CD14-positive monocyte (primary cell): ENCODE measurements at regions of chr22 and their contacts with region 1.

Region 1: DNA sequence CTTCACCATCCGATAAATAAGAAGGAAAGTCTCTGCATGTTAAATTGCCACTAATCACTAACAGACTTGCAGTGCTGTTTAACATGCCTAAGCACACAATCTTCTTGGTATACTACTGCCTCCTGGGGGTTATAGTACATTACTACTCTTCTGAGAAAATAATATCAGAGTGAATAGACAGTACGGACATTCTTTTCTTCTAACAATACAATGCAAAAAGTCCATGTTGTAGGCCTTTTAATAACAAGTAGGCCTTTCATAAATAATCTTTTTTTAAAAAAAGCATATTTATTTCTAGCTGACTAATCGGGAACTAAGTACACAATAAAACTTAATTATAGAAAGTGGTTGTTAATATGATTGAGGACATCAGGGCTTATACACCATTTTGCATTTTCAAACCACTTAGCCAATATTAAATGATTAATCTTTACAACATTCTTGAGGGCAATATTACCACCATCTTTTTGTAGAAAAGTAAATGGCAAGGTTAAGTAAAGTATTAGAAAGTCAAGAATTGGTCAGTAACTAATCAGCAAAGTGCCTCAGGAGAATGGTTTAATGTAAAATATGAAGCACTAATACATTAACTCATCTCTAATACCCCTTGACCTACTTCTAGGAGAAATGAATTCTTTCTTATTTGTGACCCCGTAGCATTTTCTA is 84.7 kb downstream of the TTC28 start:
- DNase-seq: peak; percentile 10 to 46 (median 26)
- H3K4me3 ChIP-seq: no peak overlapping the region
- H3K4me3 Mint-ChIP-seq: no peak overlapping the region
- H3K27ac ChIP-seq: no peak overlapping the region
- H3K27ac Mint-ChIP-seq: no peak overlapping the region
- H3K4me1 ChIP-seq: no peaks in the 10 kb centered on the region
- H3K4me1 Mint-ChIP-seq: no peaks in the 10 kb centered on the region
- H3K27me3 ChIP-seq: no peaks in the 10 kb centered on the region
- H3K27me3 Mint-ChIP-seq: peaks cover 0 to 2% (median 0%) of the 10 kb centered on the region in 3 donors
- CTCF ChIP-seq: peak; percentile 87

Region 2: GRCh38 chr22:27880778-27881394 is 714.0 kb before region 1 on chr22:
- intact Hi-C with region 1: loop called in 1 of 2 experiments (anchors 10 kb)
- DNase-seq: peak in 2 of 3 donors; percentile 27 to 33
- H3K4me3 ChIP-seq: no peak overlapping the region
- H3K4me3 Mint-ChIP-seq: no peak overlapping the region
- H3K27ac ChIP-seq: no peak overlapping the region
- H3K27ac Mint-ChIP-seq: peak overlapping the region in 1 of 7 donors; percentile 32
- H3K4me1 ChIP-seq: no peaks in the 10 kb centered on the region
- H3K4me1 Mint-ChIP-seq: no peaks in the 10 kb centered on the region
- H3K27me3 ChIP-seq: no peaks in the 10 kb centered on the region
- H3K27me3 Mint-ChIP-seq: no peaks in the 10 kb centered on the region
- CTCF ChIP-seq: peak; percentile 64

Region 3: GRCh38 chr22:28019881-28020871 is 574.8 kb before region 1 on chr22:
- intact Hi-C with region 1: loop called (anchors 5 to 10 kb)
- DNase-seq: peak; percentile 9 to 44 (median 31)
- H3K4me3 ChIP-seq: no peak overlapping the region
- H3K4me3 Mint-ChIP-seq: no peak overlapping the region
- H3K27ac ChIP-seq: no peak overlapping the region
- H3K27ac Mint-ChIP-seq: peak overlapping the region in 1 of 7 donors; percentile 50
- H3K4me1 ChIP-seq: no peaks in the 10 kb centered on the region
- H3K4me1 Mint-ChIP-seq: no peaks in the 10 kb centered on the region
- H3K27me3 ChIP-seq: no peaks in the 10 kb centered on the region
- H3K27me3 Mint-ChIP-seq: peaks cover 0 to 3% (median 2%) of the 10 kb centered on the region in 3 donors
- CTCF ChIP-seq: peak; percentile 96

Region 4: GRCh38 chr22:28051787-28052356 is 543.1 kb before region 1 on chr22:
- intact Hi-C with region 1: loop called (anchors 2 to 10 kb)
- DNase-seq: peak; percentile 4 to 23 (median 9)
- H3K4me3 ChIP-seq: no peak overlapping the region
- H3K4me3 Mint-ChIP-seq: no peak overlapping the region
- H3K27ac ChIP-seq: no peak overlapping the region
- H3K27ac Mint-ChIP-seq: no peak overlapping the region
- H3K4me1 ChIP-seq: no peaks in the 10 kb centered on the region
- H3K4me1 Mint-ChIP-seq: no peaks in the 10 kb centered on the region
- H3K27me3 ChIP-seq: no peaks in the 10 kb centered on the region
- H3K27me3 Mint-ChIP-seq: peaks cover 0 to 2% (median 0%) of the 10 kb centered on the region in 3 donors
- CTCF ChIP-seq: peak; percentile 81

Region 5: DNA sequence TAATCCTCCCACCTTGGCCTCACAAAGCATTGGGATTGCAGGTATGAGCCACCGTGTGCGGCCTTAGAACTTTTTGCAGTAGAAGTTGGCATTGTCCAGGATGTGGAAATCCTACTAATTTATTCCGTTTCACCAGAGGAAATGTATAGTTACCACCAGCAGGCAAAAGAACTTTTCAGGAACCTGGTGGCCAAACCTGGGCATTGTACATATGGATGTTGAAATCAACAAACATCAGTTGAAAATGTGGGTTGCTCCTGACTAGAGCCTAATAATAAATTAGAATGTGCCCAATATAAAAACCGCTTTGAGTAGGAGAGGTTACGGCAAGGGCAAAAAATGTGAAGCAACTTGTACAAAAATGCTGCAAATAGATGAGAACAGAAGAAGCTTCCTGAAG is 246.2 kb after region 1 on chr22:
- intact Hi-C with region 1: no loop called
- DNase-seq: no peak
- H3K4me3 ChIP-seq: no peak overlapping the region
- H3K4me3 Mint-ChIP-seq: no peak overlapping the region
- H3K27ac ChIP-seq: no peak overlapping the region
- H3K27ac Mint-ChIP-seq: no peak overlapping the region
- H3K4me1 ChIP-seq: peaks cover 8 to 11% of the 10 kb centered on the region in 2 donors
- H3K4me1 Mint-ChIP-seq: peaks cover 15% of the 10 kb centered on the region
- H3K27me3 ChIP-seq: no peaks in the 10 kb centered on the region
- H3K27me3 Mint-ChIP-seq: no peaks in the 10 kb centered on the region
- CTCF ChIP-seq: no peak